AG04449 (cell line): ENCODE measurements at regions of chr2 and their contacts with region 1.

Region 1: DNA sequence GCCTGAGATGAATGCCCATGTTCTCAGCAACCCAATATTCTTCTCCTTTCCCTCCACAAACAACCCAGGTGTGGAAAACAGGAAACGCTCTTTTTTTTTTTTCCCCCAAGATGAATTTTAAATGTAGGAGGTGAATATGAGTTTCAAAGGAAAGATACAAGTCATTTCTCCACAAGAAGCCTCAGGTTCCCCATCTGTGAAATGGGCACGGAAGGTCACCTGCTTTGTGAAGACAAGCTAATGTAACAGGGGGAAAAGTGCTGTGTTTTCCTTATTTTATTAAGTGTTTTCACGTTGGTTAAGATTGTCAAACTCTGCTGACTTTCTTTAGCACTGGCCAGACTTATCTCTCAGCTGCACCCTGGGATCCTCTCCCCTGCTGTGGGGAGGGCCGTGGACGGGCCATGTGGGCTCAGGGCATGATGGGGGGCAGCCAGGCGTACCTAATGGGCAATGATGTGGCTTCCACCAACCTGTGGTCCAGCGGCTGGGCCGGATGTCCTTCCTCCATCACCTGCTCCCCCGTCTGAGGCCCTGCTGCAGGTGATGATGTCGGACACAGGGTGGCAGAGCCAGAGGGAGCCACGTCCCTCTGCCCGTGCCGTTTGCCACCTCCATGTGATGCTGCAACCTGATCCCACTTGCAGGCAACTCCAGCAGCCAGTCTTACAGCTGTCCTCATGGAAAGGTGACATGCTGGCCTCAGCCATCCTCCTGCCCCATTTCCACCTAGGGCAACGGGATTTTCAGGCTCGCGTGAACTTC is 130.0 kb upstream of the PXDN start:
- DNase-seq: no peak
- H3K4me3 ChIP-seq: no peak overlapping the region
- CTCF ChIP-seq: no peak

Region 2: DNA sequence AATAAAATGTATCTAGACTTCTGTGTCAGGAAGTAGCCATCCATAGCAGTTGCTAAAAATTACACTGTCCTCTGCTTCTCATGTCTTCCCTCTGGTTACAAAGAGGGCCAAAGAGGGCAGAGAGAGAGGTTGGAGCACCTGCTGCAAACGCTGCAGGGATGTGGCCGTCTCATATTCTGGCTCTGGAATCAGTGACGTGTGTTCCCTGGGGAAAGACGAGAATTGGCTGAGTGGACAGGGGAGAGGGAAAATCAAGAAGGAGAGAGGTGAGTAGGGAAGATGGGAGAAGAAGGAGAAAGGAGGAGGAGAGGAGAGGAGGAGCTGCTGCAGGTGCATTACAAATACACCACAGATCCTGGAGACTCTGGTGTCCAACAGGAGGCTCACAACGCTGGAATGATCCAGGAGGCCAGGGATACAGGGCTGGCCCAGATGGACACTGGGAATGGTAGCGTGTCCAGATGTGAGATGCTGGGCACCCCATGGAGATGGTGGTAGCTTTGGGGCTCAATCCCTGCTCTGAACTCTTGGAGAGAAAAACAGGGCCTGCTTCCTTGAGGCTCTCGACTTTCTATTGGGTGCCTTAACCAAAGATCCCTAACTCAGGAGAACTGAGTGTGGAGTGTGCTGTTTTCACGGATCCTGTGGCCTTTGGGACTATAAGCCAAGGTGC is 11.5 kb before region 1 on chr2:
- CTCF ChIA-PET with region 1: no interaction called
- POLR2A ChIA-PET with region 1: no interaction called
- DNase-seq: no peak
- H3K4me3 ChIP-seq: no peak overlapping the region
- CTCF ChIP-seq: no peak

Region 3: GRCh38 chr2:1886405-1886992 is 12.2 kb after region 1 on chr2:
- CTCF ChIA-PET with region 1: interaction called, 15 read pairs
- POLR2A ChIA-PET with region 1: no interaction called
- DNase-seq: peak; percentile 14
- H3K4me3 ChIP-seq: no peak overlapping the region
- CTCF ChIP-seq: peak; percentile 70